ENCODE measurements at regions of chr1 and their contacts with region 1.

Region 1: DNA sequence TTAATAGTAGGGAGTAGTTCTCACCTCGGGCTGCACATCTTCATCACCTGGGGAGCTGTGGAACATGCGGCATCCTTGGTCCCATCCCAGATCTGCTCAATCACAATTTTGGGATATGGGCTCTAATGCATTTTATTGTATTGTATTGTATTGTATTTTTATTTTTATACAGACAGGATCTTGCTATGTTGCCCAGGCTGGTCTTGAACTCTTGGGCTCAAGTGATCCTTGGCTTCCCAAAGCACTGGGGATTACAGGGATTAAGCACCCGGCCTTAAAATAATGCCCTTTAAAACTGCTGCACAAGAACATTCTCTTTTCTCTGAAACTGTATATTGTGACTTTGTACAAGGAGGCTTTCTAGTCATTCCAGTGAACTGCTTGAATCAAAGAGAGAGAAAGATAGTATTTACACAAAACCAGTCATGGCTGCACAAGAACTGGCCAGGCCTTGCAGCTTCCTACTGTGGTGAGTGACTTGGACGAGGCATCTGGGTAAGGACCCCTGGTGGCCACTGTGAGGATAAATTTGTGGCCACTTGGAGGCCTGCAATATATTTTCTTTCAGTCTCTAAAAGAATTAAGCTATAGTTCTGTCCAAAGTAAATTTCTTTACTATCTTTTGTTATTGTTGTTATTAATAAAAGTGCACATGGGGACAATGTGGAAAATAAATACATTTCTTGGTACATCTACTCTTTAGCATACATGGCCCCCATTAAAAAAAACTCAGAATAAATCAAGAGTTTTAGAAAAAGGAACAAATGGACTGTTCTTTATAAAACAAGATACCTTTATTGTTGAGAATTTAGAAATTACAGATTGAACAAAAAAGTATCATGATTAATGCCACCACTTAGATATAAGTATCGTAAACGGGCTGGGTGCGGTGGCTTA is 48.0 kb downstream of the TBCE start:
- DNase-seq: no peak
- ATAC-seq: peak; percentile 88
- H3K4me3 Mint-ChIP-seq: no peak overlapping the region
- H3K27ac Mint-ChIP-seq: no peak overlapping the region
- H3K4me1 Mint-ChIP-seq: peaks cover 2% of the 10 kb centered on the region
- H3K27me3 Mint-ChIP-seq: no peaks in the 10 kb centered on the region
- CTCF ChIP-seq: peak; percentile 34

Region 2: GRCh38 chr1:234114648-234115307 is 1300.5 kb before region 1 on chr1:
- CTCF ChIA-PET with region 1: no interaction called
- POLR2A ChIA-PET with region 1: no interaction called
- intact Hi-C with region 1: loop called (anchors 2 kb)
- DNase-seq: no peak
- ATAC-seq: no peak
- H3K4me3 Mint-ChIP-seq: no peak overlapping the region
- H3K27ac Mint-ChIP-seq: no peak overlapping the region
- H3K4me1 Mint-ChIP-seq: peaks cover 4% of the 10 kb centered on the region
- H3K27me3 Mint-ChIP-seq: peaks cover 6% of the 10 kb centered on the region
- CTCF ChIP-seq: no peak

Region 3: DNA sequence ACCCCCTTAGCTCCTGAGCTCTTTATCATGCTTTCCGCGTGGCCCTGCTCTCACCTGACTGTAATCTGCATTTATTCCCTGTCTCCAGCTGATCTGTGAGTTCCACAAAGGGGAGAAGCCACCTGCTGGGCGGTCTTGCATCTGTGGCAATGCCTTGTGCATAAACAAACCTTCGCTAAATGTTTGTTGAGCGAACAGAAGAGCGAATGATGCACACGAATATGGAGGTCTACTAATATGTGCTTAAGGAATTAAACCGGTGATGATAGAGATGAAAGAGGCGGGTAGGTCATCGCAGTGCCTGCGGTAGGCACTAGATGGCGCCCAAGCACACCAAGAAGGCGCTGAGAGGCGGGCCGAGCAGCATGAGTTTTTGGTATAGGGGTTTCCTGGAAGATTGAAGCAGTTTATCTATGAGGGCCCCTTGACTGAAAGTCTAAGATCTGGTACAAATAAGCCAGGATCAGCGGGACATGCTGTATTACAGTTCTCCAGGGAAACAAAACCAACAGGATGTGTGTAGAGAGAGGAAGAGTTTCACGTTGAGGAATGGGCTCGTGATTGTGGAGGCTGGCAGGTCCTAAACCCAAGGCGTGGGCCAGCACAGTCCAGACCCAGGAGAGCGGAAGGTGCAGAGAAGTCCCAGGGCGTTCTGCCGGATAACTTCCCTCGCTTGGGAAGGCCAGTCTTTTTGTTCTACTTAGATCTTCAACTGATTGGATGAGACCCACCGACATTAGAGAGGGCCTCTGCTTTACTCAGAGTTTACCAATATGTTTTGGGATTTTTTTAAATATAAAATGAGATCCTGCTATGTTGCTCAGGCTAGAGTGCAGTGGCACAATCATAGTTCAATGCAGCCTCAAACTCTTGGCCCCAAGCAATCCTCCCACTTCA is 321.3 kb before region 1 on chr1:
- CTCF ChIA-PET with region 1: interaction called, 5 read pairs
- POLR2A ChIA-PET with region 1: no interaction called
- intact Hi-C with region 1: loop called (anchors 1 kb)
- DNase-seq: peak; percentile 75
- ATAC-seq: peak; percentile 98
- H3K4me3 Mint-ChIP-seq: no peak overlapping the region
- H3K27ac Mint-ChIP-seq: no peak overlapping the region
- H3K4me1 Mint-ChIP-seq: peaks cover 5% of the 10 kb centered on the region
- H3K27me3 Mint-ChIP-seq: peaks cover 7% of the 10 kb centered on the region
- CTCF ChIP-seq: peak; percentile 92

Region 4: GRCh38 chr1:235199441-235199840 is 215.8 kb before region 1 on chr1:
- CTCF ChIA-PET with region 1: interaction called, 7 read pairs
- POLR2A ChIA-PET with region 1: interaction called, 6 read pairs
- intact Hi-C with region 1: loop called (anchors 5 kb)
- DNase-seq: no peak
- ATAC-seq: no peak
- H3K4me3 Mint-ChIP-seq: no peak overlapping the region
- H3K27ac Mint-ChIP-seq: peak overlapping the region; percentile 52
- H3K4me1 Mint-ChIP-seq: peaks cover 2% of the 10 kb centered on the region
- H3K27me3 Mint-ChIP-seq: no peaks in the 10 kb centered on the region
- CTCF ChIP-seq: no peak

Region 5: GRCh38 chr1:235253219-235253962 is 161.9 kb before region 1 on chr1:
- CTCF ChIA-PET with region 1: interaction called, 82 read pairs
- POLR2A ChIA-PET with region 1: interaction called, 5 read pairs
- intact Hi-C with region 1: loop called (anchors 1 kb)
- DNase-seq: no peak
- ATAC-seq: peak; percentile 97
- H3K4me3 Mint-ChIP-seq: no peak overlapping the region
- H3K27ac Mint-ChIP-seq: no peak overlapping the region
- H3K4me1 Mint-ChIP-seq: peaks cover 18% of the 10 kb centered on the region
- H3K27me3 Mint-ChIP-seq: no peaks in the 10 kb centered on the region
- CTCF ChIP-seq: peak; percentile 89

Region 6: DNA sequence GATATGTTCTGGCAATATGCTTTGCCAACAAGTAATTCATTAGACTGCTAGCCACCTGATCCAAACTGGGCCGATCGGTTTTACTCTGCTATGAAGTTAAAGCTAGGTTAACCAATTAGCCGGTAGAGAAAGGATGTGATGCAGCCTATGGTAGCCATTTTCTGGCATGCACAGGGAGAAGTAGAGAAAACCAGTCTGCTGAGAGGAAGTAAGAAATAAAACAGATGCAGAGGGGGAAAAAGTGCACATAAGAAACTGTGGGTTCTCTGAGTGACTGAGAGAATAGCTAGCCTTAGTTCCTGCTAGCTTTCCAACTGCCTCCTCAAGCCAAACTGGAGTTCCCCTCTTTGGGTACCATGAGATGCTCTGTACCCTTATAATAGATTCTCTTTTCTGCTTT is 140.0 kb before region 1 on chr1:
- CTCF ChIA-PET with region 1: interaction called, 12 read pairs
- POLR2A ChIA-PET with region 1: no interaction called
- intact Hi-C with region 1: no loop called
- DNase-seq: no peak
- ATAC-seq: peak; percentile 86
- H3K4me3 Mint-ChIP-seq: peak overlapping the region; percentile 21
- H3K27ac Mint-ChIP-seq: peak overlapping the region; percentile 76
- H3K4me1 Mint-ChIP-seq: peaks cover 75% of the 10 kb centered on the region
- H3K27me3 Mint-ChIP-seq: no peaks in the 10 kb centered on the region
- CTCF ChIP-seq: no peak

Region 7: GRCh38 chr1:235831148-235831547 is 415.9 kb after region 1 on chr1:
- CTCF ChIA-PET with region 1: no interaction called
- POLR2A ChIA-PET with region 1: no interaction called
- intact Hi-C with region 1: no loop called
- DNase-seq: no peak
- ATAC-seq: peak; percentile 100
- H3K4me3 Mint-ChIP-seq: peak overlapping the region; percentile 13
- H3K27ac Mint-ChIP-seq: peak overlapping the region; percentile 84
- H3K4me1 Mint-ChIP-seq: peaks cover 20% of the 10 kb centered on the region
- H3K27me3 Mint-ChIP-seq: no peaks in the 10 kb centered on the region
- CTCF ChIP-seq: no peak